ENCODE measurements at regions of chr20 and their contacts with region 1.

Region 1: DNA sequence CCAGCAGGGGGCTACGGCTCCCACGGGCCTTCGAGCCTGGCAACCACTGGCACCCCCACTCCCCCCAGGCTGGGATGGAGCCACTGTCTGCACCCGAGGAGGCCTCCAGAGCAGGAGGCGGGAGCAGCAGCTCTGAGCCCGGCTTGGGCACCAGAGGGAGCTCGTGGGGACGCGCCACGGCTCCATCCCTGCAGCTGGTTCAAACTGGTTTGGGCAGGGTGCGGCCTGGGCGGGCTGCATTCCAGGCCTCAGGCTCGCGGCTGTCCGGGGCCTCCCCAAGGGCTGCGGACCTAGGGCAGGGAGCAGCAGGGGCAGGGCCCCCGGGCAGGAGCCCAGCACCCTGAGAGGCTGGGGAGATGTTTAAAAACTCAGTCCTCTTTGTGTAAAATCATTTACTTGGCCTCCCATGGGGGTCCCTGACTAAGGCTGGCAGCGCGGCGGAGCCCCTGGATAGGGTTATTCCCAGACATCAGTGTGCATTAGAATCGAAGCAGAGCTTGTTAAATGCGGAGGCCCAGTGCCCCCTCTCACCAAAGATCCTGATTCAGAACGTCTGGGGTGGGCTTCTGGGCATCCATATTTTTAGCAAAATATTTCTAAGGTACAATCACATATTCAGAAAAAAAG is 4.1 kb upstream of the BCAS4 start:
- DNase-seq: peak; percentile 85
- ATAC-seq: peak; percentile 58
- H3K4me3 ChIP-seq: peak overlapping the region in 4 of 5 experiments; percentile 13 to 36 (median 26)
- H3K4me3 Mint-ChIP-seq: no peak overlapping the region
- H3K27ac ChIP-seq: peak overlapping the region; percentile 81 to 92
- H3K27ac Mint-ChIP-seq: peak overlapping the region; percentile 86
- H3K4me1 ChIP-seq: peaks cover 16 to 26% of the 10 kb centered on the region in 2 donors
- H3K4me1 Mint-ChIP-seq: peaks cover 20% of the 10 kb centered on the region
- H3K27me3 ChIP-seq: no peaks in the 10 kb centered on the region
- H3K27me3 Mint-ChIP-seq: no peaks in the 10 kb centered on the region
- CTCF ChIP-seq: peak; percentile 76

Region 2: DNA sequence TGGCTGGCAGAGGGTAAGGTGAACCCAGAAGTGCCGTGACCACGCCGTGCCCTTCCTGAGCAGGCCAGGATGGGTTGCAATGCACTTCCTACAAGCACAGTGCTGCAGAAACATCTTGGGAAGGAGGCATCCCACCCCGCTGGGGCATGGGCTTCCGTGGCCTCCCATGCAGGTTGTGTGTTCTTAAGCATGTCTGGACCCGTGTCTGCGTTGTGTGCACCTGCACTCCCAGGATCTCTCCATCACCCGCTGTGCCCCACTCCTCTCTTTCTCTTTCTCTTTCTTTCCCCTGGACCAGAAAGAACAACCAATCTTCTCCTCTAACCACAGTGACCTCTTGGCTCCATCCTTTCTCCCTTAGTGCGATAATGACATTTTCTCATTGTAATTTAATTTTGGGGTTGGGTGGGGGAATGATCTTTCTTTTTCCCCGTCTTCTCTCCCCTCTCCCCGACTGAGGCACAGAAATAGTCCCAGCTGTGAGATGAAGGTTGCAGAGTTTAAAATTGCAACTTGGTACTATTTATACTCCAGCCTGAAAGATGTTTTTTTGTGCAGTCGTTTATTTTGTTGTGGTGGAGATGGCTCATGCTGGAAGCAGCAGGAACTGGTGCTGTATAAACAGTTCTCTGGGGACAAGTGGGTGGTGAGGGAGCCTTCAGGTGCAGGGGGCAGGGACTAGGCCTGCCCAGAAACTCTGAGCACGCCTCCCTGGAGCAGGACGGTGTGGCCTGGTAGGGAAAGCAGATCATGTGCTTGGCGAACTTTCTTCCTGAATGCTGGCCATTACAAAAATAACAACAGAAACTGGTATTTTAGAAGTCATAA is 24.6 kb after region 1 on chr20:
- CTCF ChIA-PET with region 1: interaction called, 340 read pairs
- POLR2A ChIA-PET with region 1: interaction called, 54 read pairs
- intact Hi-C with region 1: loop called (anchors 1 kb)
- DNase-seq: peak; percentile 63
- ATAC-seq: peak; percentile 72
- H3K4me3 ChIP-seq: peak overlapping the region in 4 of 5 experiments; percentile 19 to 46 (median 38)
- H3K4me3 Mint-ChIP-seq: peak overlapping the region; percentile 88
- H3K27ac ChIP-seq: peak overlapping the region; percentile 57 to 77
- H3K27ac Mint-ChIP-seq: peak overlapping the region; percentile 97
- H3K4me1 ChIP-seq: peaks cover 87 to 98% of the 10 kb centered on the region in 2 donors
- H3K4me1 Mint-ChIP-seq: peaks cover 86% of the 10 kb centered on the region
- H3K27me3 ChIP-seq: no peaks in the 10 kb centered on the region
- H3K27me3 Mint-ChIP-seq: no peaks in the 10 kb centered on the region
- CTCF ChIP-seq: no peak

Region 3: DNA sequence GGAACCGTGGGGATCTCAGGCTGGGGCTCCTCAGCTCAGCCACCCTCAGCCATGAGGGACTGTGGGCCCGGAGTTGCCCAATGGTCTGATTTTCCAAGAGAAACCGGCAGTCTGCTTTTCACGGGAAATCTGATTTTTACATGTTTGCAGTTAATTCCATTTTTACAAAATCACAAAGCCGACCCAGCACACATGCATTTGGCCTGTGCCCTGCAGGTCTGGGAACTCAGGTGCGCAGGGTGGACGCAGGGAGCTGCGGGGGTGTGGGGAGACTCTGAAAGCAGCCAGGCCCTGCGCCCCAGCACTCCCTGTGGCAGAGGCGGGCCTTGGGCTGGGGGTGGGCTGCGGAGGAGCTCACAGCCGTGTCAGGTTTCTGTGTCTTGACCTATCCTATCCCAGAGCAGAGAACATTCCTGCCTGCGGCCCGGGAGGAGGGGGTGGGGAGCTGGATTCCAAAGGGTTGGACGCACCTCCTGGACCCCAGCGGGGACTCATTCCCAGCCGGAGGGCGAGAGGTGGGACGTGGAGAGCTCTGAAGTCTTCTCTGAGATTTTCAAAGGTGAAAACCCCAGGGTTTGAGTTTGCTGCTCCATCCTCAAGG is 79.9 kb after region 1 on chr20:
- CTCF ChIA-PET with region 1: interaction called, 16 read pairs
- POLR2A ChIA-PET with region 1: interaction called, 5 read pairs
- intact Hi-C with region 1: no loop called
- DNase-seq: no peak
- ATAC-seq: no peak
- H3K4me3 ChIP-seq: no peak overlapping the region
- H3K4me3 Mint-ChIP-seq: no peak overlapping the region
- H3K27ac ChIP-seq: no peak overlapping the region
- H3K27ac Mint-ChIP-seq: peak overlapping the region; percentile 50
- H3K4me1 ChIP-seq: peaks cover 10 to 32% of the 10 kb centered on the region in 2 donors
- H3K4me1 Mint-ChIP-seq: peaks cover 24% of the 10 kb centered on the region
- H3K27me3 ChIP-seq: no peaks in the 10 kb centered on the region
- H3K27me3 Mint-ChIP-seq: no peaks in the 10 kb centered on the region
- CTCF ChIP-seq: no peak

Region 4: GRCh38 chr20:50929299-50930138 is 138.8 kb after region 1 on chr20:
- CTCF ChIA-PET with region 1: interaction called, 390 read pairs
- POLR2A ChIA-PET with region 1: interaction called, 123 read pairs
- intact Hi-C with region 1: loop called (anchors 1 kb)
- DNase-seq: peak; percentile 95
- ATAC-seq: peak; percentile 55
- H3K4me3 ChIP-seq: peak overlapping the region; percentile 62 to 85 (median 76)
- H3K4me3 Mint-ChIP-seq: peak overlapping the region; percentile 92
- H3K27ac ChIP-seq: peak overlapping the region; percentile 62 to 68
- H3K27ac Mint-ChIP-seq: peak overlapping the region; percentile 91
- H3K4me1 ChIP-seq: peaks cover 24 to 28% of the 10 kb centered on the region in 2 donors
- H3K4me1 Mint-ChIP-seq: peaks cover 53% of the 10 kb centered on the region
- H3K27me3 ChIP-seq: no peaks in the 10 kb centered on the region
- H3K27me3 Mint-ChIP-seq: no peaks in the 10 kb centered on the region
- CTCF ChIP-seq: peak; percentile 95

Region 5: DNA sequence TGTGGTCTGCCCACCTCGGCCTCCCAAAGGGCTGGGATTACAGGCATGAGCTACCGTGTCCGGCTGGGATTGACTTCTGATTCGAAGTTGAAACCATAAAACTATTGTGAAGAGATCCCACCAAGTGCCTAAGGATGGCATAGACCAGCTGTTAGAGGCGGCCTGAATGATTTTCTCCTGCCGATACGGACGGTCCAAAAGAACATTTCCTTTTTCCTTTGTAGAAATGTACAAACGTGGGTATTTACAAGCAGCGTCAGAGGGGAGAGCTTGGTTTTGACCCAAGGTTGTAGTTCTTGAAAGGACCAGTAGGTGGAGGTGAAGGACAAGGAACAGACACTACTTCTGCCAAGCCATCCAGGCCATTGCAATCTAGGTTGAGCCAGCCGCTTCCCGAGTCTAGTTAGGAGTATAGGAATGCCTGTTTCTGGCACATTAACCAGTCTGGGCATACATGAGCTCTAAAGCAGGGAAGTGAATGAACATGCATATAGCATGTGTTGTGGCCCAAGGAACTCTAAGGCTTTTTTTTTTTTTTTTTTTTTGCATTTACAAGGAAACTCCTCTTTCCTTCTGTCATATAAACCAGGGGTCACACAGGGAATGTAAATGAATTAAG is 196.9 kb after region 1 on chr20:
- CTCF ChIA-PET with region 1: interaction called, 27 read pairs
- POLR2A ChIA-PET with region 1: no interaction called
- intact Hi-C with region 1: no loop called
- DNase-seq: peak; percentile 86
- ATAC-seq: peak; percentile 99
- H3K4me3 ChIP-seq: no peak overlapping the region
- H3K4me3 Mint-ChIP-seq: no peak overlapping the region
- H3K27ac ChIP-seq: no peak overlapping the region
- H3K27ac Mint-ChIP-seq: peak overlapping the region; percentile 11
- H3K4me1 ChIP-seq: peaks cover 10 to 11% of the 10 kb centered on the region in 2 donors
- H3K4me1 Mint-ChIP-seq: peaks cover 12% of the 10 kb centered on the region
- H3K27me3 ChIP-seq: peaks cover 0 to 15% (median 4%) of the 10 kb centered on the region in 4 experiments
- H3K27me3 Mint-ChIP-seq: peaks cover 23% of the 10 kb centered on the region
- CTCF ChIP-seq: peak; percentile 87

Measured in B cell (primary cell).